Uterus (tissue), 4 donors: ENCODE measurements at regions of chr2 and their contacts with region 1.

Region 1: DNA sequence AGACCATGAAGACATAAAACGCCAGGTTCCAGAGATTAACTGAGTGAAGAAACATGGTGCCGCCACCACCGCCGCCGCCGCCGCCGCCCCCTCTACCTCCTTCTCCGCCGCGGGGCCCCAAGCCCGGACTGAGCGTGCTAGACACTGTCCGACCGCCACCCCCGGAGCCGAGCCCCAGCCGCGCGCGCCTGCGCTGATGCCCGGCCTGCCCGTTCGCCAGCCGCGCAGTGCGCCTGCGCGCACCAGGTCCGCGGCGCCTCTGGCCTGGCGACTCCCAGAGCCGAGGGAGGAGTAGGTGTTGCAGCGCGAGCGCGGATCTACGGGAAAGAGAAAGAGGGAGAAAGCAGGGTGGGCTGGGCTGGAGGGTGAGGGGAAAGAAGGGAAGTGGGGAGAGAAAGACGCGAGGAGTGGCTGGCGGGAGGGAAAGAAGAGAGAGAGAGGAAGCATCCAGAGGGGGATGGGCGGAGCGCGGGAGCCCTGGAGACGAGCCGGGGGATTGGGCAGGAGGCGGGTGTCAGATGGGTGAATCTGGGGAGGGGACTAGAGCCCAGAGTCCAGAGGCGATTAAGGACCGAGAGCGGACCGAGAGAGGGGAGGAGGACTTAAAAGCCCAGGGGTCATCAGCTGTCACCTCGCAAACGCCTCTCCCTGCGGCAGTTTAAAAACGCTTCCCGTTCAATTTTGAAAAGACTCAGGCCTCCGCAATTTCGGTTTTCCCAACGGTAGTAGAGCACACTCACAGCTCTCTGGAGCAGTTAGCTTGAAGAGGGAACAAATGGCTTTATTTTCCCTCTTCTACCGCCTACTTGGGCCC is at the start of gene PGAP1:
- DNase-seq: peak; percentile 85 to 92
- H3K4me3 ChIP-seq: peak within 1 kb of the TSS; percentile 77 to 83
- H3K27ac ChIP-seq: peak within 1 kb of the TSS; percentile 96
- H3K4me1 ChIP-seq: peaks cover 0 to 7% of the 10 kb centered on the region in 2 donors
- H3K27me3 ChIP-seq: no peaks in the 10 kb centered on the region
- CTCF ChIP-seq: no peak
- POLR2A ChIP-seq: peak; percentile 64 to 83
- total RNA-seq, gene PGAP1: 19.4 to 76.3 (median 23.7) TPM

Region 2: DNA sequence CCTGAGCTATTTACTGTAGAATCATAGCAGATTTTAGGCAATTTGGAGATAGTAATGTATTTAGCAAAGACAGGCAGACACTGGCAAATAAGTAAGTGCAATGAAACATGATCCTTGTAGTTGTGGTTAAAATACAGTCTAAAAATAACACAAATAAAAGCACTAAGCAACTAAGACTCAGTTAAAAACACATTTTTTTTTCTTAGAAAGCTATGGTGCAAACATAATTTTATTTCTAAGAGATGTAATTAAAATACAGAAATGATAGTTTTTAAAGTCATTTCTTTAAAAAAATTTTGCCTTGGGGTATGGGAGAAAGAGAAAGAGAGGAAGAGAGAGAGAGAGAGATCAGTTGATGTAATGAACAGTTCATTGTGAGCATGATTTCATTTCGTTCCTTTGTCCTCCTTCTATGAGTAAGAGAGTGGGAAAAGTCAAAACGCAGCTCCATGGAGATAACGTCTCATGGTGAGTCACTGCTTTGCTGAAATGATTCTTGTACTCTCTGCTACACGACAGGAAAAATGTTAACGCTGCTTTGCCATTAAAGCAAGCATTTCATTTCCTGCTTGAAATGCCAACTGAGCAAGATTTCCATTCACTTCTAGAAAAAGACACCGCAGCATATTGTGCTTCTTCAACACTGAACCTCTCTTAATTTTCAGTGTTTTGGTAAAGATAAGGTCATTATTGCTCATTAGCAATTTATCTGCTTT is 61.0 kb after region 1 on chr2:
- intact Hi-C with region 1: loop called (anchors 5 kb)
- DNase-seq: peak; percentile 23 to 57
- H3K4me3 ChIP-seq: no peak overlapping the region
- H3K27ac ChIP-seq: peak overlapping the region; percentile 59 to 86
- H3K4me1 ChIP-seq: no peaks in the 10 kb centered on the region
- H3K27me3 ChIP-seq: no peaks in the 10 kb centered on the region
- CTCF ChIP-seq: no peak
- POLR2A ChIP-seq: no peak

Region 3: DNA sequence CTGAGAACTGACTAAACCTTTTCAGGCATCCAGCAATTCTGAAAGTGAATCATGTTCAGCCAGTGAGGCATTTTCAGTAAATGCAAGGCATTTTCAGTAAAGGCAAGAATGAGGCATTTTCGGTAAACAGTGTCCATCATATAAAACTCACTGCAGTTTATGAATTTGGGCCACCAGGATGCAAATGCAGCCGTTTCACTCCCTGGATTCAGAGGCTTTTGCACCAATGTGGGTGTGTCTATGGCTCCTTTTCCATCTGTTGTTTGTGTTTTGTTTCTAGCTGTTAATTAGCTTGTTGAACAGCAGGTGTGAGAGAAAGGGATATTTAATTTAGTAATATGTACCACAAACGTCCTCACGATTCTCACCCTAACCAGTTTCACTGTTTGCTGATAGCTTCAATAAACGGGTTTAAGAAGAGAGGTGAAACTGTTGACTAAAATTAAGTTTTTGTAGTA is 116.0 kb after region 1 on chr2:
- intact Hi-C with region 1: no loop called
- DNase-seq: no peak
- H3K4me3 ChIP-seq: no peak overlapping the region
- H3K27ac ChIP-seq: no peak overlapping the region
- H3K4me1 ChIP-seq: no peaks in the 10 kb centered on the region
- H3K27me3 ChIP-seq: no peaks in the 10 kb centered on the region
- CTCF ChIP-seq: no peak
- POLR2A ChIP-seq: no peak